ENCODE measurements at regions of chr6 and their contacts with region 1.

Region 1: DNA sequence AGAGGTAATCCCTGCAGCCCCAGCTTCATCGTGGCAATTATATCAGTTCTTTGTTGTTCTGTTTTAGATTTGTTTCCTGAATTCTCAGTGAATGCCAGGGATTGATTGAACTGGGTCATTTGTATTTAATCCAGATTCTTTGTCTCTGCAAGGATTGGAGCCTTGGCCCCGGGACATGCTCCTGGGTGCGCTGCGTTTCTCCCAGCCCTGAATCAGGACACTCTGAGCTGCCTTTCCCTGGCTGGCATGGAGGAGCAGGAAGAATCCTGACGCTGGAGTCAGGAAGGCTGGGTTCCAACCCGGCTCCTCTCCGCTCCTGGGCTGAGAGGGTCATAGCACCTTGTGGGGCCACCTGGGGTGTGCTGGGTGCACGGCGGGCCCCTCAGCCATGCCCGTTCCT is 545.6 kb downstream of the QKI start:
- DNase-seq: no peak

Region 2: GRCh38 chr6:163814494-163815364 is 145.4 kb before region 1 on chr6:
- CTCF ChIA-PET with region 1: no interaction called
- POLR2A ChIA-PET with region 1: no interaction called
- DNase-seq: no peak

Region 3: GRCh38 chr6:164109770-164110140 is 149.6 kb after region 1 on chr6:
- CTCF ChIA-PET with region 1: interaction called, 10 read pairs
- POLR2A ChIA-PET with region 1: no interaction called
- DNase-seq: peak; percentile 57